ENCODE measurements at regions of chr4 and their contacts with region 1.

Region 1: DNA sequence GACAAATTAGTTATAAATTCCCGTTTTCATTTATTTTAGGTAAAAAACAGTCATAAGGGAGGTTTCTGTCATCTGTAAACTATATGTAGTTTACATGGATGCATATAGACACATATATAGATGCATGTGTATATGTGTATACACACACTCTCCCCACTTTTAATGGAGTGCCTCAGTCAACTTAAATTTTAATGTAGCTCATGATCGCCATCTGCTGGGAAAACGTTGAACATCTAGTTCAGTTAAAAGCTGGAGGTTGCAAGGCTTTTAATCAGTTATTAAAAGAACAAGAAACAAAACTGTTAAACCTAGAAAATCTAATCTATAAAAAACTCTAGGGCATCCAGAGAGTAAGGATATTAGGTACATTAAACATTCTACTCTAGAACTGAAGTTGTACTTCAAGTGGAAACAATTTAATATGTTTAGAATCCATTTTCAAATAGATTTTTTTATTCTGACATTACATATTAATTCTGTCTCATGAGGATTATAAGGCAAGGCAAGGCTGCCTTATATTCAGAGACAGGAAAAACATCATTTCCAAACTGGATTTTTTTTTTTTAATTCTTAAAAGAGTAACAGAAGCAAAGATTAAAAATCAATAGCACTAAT is 122.6 kb downstream of the SHISA3 start:
- DNase-seq: peak; percentile 63
- H3K4me3 ChIP-seq: no peak overlapping the region
- H3K27ac ChIP-seq: no peak overlapping the region
- H3K4me1 ChIP-seq: no peaks in the 10 kb centered on the region
- H3K27me3 ChIP-seq: peaks cover 4% of the 10 kb centered on the region
- CTCF ChIP-seq: peak; percentile 71

Region 2: DNA sequence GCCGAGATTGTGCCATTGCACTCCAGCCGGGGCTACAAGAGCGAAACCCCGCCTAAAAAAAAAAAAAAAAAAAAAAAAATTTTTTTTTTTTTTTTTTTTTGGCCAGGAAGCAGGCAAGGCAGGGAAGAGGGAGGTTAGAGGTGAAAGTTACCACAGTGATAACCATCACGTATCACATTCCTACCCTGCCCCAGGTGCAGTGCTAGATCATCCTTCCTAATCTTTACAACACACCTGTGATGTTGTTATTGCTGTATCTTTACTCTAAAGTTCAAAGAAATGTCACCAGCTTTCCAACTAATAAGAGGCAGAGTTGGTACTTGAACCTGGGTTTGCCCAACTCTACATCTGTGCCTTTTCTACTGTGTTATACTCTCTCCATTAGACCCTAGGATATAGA is 989.2 kb before region 1 on chr4:
- CTCF ChIA-PET with region 1: interaction called, 14 read pairs
- POLR2A ChIA-PET with region 1: no interaction called
- intact Hi-C with region 1: no loop called
- DNase-seq: no peak
- H3K4me3 ChIP-seq: no peak overlapping the region
- H3K27ac ChIP-seq: no peak overlapping the region
- H3K4me1 ChIP-seq: no peaks in the 10 kb centered on the region
- H3K27me3 ChIP-seq: peaks cover 5% of the 10 kb centered on the region
- CTCF ChIP-seq: no peak

Region 3: GRCh38 chr4:41692717-41693345 is 827.1 kb before region 1 on chr4:
- CTCF ChIA-PET with region 1: no interaction called
- POLR2A ChIA-PET with region 1: no interaction called
- intact Hi-C with region 1: loop called (anchors 5 kb)
- DNase-seq: peak; percentile 76
- H3K4me3 ChIP-seq: peak overlapping the region; percentile 2
- H3K27ac ChIP-seq: no peak overlapping the region
- H3K4me1 ChIP-seq: no peaks in the 10 kb centered on the region
- H3K27me3 ChIP-seq: peaks cover 26% of the 10 kb centered on the region
- CTCF ChIP-seq: peak; percentile 92

Region 4: DNA sequence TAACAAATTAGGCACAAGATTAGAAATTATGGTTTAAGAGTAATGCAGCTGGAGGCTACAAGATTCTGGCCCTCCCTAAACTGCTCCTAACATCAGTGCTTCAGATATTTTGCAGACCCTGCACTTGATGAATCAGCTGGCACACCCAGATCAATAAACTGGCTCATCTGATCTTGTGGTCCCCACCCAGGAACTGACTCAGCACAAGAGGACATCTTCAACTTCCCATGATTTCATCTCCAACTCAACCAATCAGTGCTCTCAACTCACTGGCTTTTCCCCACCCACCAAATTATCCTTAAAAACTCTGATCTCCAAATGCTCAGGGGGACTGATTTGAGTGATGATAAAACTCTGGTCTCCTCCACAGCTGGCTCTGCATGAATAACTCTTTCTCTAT is 606.4 kb before region 1 on chr4:
- CTCF ChIA-PET with region 1: interaction called, 11 read pairs
- POLR2A ChIA-PET with region 1: no interaction called
- intact Hi-C with region 1: no loop called
- DNase-seq: peak; percentile 12
- H3K4me3 ChIP-seq: no peak overlapping the region
- H3K27ac ChIP-seq: no peak overlapping the region
- H3K4me1 ChIP-seq: no peaks in the 10 kb centered on the region
- H3K27me3 ChIP-seq: no peaks in the 10 kb centered on the region
- CTCF ChIP-seq: no peak

Region 5: DNA sequence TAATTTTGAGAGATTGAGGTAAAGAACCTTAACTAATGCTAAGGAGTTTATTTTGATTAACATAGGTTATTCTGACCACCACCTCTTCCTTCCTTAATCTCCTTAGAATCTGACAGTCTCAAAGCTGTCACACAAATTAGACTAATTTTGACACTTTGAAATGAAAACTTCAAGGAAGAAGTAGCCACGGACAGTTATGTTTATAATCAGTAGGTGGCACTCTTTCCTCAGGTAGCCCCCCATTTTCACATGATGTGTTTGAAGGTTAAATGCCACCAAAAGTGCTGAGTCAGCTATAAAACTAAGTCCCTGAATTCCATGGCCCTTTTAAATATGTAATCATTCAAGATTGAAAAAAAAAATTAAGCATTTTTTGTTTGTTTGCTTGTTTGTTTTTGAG is 562.3 kb before region 1 on chr4:
- CTCF ChIA-PET with region 1: no interaction called
- POLR2A ChIA-PET with region 1: no interaction called
- intact Hi-C with region 1: loop called (anchors 10 kb)
- DNase-seq: peak; percentile 55
- H3K4me3 ChIP-seq: no peak overlapping the region
- H3K27ac ChIP-seq: no peak overlapping the region
- H3K4me1 ChIP-seq: no peaks in the 10 kb centered on the region
- H3K27me3 ChIP-seq: no peaks in the 10 kb centered on the region
- CTCF ChIP-seq: peak; percentile 61

Region 6: DNA sequence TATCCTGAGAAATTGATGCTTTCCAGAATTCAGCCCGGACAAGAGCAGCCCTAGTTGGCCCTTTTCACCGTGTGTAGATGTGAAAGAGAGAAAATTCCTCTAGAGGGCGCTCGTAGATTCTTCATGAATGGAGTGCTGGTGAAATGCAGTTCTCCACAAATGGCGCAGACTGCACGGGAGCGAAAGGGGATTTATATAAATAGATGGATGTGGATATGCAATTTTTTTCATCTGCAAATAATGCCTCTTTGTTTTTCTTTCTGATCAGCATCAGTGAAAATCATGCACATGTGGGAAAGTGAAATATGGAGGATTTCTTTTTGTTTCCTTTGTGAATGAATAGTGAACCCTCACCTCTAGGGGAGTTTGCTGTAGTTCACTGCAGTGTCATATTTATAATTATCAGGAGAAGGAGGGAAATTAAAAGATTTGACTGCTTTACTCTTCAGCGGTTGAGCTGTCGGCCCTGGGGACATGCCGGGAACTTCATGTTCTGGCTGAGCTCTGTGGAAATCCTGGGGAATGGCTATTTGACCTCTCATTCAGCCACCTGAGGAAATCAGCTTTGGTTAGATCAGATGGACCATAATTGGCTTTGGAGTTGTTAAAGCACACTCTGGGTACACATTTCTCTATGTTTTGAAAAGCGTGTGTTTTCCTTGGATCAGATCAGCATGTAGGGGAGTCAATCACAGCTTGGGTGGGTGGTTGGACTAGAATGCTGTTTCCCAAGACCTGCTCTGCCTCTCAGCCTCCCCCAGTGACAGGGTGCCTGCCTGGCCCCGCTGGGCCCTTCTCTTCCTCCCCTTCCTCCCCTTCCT is 237.6 kb before region 1 on chr4:
- CTCF ChIA-PET with region 1: interaction called, 7 read pairs
- POLR2A ChIA-PET with region 1: no interaction called
- intact Hi-C with region 1: loop called (anchors 1 kb)
- DNase-seq: peak; percentile 85
- H3K4me3 ChIP-seq: no peak overlapping the region
- H3K27ac ChIP-seq: no peak overlapping the region
- H3K4me1 ChIP-seq: no peaks in the 10 kb centered on the region
- H3K27me3 ChIP-seq: no peaks in the 10 kb centered on the region
- CTCF ChIP-seq: peak; percentile 80

Region 7: DNA sequence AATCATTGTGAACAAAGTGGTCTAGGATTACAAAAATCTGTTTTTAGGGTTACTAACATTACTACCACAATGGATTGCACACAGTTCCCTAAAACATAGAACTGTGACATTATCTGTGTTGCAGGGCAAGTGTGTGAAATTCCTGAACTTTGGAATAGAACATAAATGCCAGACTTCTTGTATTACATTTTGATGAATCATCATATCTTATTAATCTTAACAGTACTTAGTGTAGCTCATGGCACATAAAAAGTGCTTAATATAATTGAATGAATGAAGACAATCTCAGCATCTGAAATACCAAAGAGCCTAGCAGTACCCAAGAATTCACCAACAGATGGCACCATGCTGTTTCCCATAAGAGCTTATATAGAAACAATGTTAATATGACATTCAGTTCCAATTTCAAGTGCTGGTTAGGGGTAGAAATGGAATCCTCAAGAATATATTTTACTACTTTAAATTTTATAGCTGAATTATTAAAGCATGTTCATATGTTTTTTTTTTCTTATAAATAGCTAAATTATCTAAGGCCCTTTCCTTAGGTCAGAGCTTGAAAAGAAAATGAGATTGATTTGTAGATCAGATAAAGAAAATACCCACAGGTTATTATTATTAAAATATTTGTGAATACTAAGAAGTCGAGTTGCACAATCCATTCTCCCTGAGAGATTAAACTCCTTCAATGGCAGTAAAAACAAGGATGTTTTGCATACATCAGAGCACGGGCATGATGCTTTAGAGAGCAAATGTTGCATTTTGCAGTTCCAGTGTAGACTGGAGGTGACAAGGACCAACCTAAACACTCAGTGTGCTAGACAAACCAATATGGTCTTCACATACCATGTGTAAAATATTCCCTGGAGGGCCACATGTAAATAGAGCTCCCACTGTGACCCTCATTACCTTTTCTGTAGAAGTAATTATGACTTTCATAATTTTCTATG is 148.3 kb before region 1 on chr4:
- CTCF ChIA-PET with region 1: interaction called, 16 read pairs
- POLR2A ChIA-PET with region 1: no interaction called
- intact Hi-C with region 1: loop called (anchors 1 kb)
- DNase-seq: peak; percentile 57
- H3K4me3 ChIP-seq: no peak overlapping the region
- H3K27ac ChIP-seq: no peak overlapping the region
- H3K4me1 ChIP-seq: no peaks in the 10 kb centered on the region
- H3K27me3 ChIP-seq: no peaks in the 10 kb centered on the region
- CTCF ChIP-seq: peak; percentile 67